ENCODE measurements at regions of chr11 and their contacts with region 1.

Region 1: GRCh38 chr11:65859200-65859811 is 927 bp upstream of the MUS81 start:
- DNase-seq: peak; percentile 90
- ATAC-seq: peak; percentile 64
- H3K4me3 Mint-ChIP-seq: peak overlapping the region; percentile 99
- H3K27ac Mint-ChIP-seq: peak overlapping the region; percentile 98
- H3K4me1 Mint-ChIP-seq: peaks cover 53% of the 10 kb centered on the region
- H3K27me3 Mint-ChIP-seq: no peaks in the 10 kb centered on the region
- CTCF ChIP-seq: no peak

Region 2: DNA sequence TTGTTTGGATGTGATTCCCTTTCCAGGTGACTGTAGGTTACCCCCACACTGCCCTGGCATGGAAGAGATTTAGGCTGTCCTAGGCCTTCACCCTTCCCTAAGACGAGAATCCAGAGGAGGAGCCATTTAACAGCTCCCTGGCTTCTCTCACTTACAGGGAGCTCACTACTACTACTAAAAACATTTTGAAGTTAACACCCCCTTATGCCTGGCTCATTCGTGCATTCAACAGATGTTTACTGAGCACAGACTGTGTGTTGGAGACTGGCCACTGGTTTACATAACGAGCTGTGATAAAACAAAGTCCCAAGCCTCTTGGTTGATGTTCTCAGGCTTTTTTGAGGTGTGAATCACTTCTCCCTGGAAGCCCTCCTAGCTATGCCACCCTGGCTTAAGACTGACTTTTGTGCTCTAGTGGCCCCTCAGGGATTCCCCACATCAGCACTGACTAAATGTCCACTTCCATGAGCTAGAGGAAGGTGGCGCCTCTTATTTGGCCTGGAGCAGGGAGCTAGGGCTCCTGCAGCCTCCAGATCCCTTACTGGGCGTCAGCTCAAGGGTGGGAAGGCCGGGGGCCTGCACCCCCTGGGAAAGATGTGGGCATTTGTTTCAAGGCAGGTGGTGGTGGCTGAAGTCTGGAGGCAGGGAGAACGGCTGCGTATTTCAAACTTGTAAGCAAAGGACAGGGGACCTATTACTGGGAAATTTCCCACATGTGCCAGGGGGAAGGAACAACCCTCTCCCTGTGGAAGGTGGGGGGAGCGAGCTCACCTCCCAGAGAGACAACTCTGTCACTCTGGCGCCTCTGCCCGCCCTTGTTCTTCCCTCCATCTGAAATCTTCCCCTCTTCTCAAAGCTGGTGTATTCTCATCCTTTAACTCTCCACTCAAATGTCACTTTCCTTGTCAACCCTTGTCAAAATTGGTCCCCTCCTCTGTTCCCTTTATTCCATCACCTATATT is 379.8 kb before region 1 on chr11:
- CTCF ChIA-PET with region 1: no interaction called
- POLR2A ChIA-PET with region 1: no interaction called
- intact Hi-C with region 1: no loop called
- DNase-seq: no peak
- ATAC-seq: no peak
- H3K4me3 Mint-ChIP-seq: no peak overlapping the region
- H3K27ac Mint-ChIP-seq: no peak overlapping the region
- H3K4me1 Mint-ChIP-seq: peaks cover 17% of the 10 kb centered on the region
- H3K27me3 Mint-ChIP-seq: no peaks in the 10 kb centered on the region
- CTCF ChIP-seq: no peak

Region 3: DNA sequence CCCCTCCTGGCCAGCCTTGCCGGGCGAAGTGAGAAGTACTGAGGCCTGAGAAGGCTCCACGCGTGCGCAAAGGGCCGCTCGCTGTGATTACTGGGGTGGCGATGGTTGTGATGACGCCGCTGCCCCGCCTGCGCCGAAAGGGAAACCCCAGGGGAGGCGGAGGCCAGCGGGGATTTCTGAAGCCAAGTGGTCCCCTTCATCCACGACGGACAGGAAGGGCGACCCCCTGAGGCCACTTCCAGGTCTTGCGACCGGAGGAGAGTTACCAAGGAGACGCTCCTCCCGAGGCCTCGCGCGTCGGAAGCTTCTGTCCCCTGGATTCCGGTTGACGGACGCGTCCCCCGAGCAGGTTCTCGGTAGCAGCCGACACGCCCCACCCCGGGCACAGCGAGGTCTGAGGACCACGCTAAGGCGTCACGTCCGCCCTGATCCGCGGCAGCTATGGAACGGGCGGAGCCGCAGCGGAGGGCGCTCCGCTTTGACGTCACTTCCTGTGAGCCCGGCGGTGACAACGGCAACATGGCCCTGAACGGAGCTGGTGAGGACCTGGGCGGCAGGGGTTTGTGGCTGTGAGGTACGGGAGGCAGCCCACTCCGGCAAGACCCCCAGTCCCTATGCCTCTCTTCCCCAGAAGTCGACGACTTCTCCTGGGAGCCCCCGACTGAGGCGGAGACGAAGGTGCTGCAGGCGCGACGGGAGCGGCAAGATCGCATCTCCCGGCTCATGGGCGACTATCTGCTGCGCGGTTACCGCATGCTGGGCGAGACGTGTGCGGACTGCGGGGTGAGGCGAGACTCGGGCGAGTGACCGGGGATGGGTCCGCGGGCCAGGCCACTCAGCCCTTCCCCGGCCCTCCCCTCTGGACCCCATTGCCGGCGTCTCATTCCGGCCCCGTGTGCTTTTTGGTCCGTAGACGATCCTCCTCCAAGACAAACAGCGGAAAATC is 289.1 kb before region 1 on chr11 and contains the start of gene ZNRD2:
- CTCF ChIA-PET with region 1: interaction called, 4 read pairs
- POLR2A ChIA-PET with region 1: interaction called, 7 read pairs
- intact Hi-C with region 1: loop called (anchors 5 kb)
- DNase-seq: peak; percentile 93
- ATAC-seq: peak; percentile 68
- H3K4me3 Mint-ChIP-seq: peak within 1 kb of the TSS; percentile 99
- H3K27ac Mint-ChIP-seq: peak within 1 kb of the TSS; percentile 99
- H3K4me1 Mint-ChIP-seq: peaks cover 78% of the 10 kb centered on the region
- H3K27me3 Mint-ChIP-seq: no peaks in the 10 kb centered on the region
- CTCF ChIP-seq: no peak
- total RNA-seq, gene ZNRD2: 40.9 and 41.0 TPM in 2 replicates

Region 4: DNA sequence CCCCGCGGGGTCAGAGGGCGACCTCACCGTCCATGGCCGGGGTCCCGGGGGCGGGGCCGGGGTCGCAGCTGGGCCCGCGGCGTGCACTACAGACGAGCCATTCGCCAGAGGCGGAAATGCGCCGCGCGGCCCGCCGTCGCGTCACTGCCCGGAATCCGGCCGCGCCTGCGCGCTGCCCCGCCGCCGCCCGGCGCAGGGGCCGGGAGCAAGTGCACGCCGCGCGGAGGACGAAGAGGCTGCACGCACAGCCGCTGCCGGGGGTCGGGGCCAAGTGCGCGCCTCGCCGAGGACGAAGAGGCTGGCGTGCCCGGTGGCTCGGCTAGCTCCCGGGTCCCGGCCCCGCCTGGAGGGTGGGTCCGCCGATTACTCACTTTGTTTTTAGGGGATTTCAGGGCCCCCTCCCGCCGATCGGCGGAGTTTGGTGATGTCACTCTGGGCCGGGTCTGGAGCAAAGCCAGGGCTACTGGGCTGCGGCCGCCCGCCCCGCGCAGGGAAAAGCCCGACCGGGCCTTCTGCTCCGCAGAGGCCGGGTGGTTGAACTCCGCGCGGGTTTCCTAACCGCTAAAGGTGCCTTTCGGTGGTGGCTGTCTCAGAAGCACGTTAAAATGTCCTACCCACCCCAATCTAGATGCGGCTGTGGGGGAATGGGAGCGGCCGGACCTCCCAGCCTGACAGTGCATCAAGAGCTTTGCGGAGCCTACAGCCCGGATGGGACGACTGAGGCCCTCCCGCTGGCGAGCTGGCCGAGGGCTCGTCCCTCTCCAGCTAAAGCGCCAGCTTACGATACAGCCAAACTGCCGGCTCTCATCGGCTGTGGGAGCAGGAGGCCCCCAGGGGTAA is 196.3 kb before region 1 on chr11 and contains the start of gene RELA:
- CTCF ChIA-PET with region 1: no interaction called
- POLR2A ChIA-PET with region 1: interaction called, 15 read pairs
- intact Hi-C with region 1: loop called (anchors 2 kb)
- DNase-seq: peak; percentile 91
- ATAC-seq: peak; percentile 87
- H3K4me3 Mint-ChIP-seq: peak within 1 kb of the TSS; percentile 87
- H3K27ac Mint-ChIP-seq: peak within 1 kb of the TSS; percentile 93
- H3K4me1 Mint-ChIP-seq: peaks cover 35% of the 10 kb centered on the region
- H3K27me3 Mint-ChIP-seq: no peaks in the 10 kb centered on the region
- CTCF ChIP-seq: no peak
- total RNA-seq, gene RELA: 110 and 119 TPM in 2 replicates

Region 5: DNA sequence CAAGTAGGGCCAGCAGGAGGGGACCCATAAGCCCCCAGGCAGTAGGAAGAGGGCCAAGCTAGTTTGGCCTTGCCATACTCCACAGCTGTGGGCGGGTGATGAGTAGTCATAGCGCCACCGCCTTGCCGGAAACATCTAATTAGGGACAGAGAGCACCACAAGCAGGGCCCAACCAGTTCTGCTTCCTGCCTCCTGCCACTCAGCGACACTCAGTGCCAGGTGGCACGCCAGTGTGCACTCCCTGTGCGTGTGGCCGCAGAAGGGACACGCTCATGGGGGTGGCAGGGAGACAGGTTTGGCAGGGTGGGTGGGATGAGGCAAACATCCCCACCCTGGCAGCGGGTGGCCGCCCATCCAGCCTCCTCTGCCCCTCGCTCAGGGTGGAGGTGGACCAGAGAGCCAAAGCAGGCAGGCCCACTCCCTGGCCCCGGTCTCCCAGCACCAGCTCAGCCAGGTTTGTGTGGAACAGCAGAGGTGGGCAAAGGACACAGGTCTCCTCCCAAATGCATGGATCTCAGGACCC is 67.6 kb before region 1 on chr11:
- CTCF ChIA-PET with region 1: interaction called, 3 read pairs
- POLR2A ChIA-PET with region 1: interaction called, 15 read pairs
- intact Hi-C with region 1: no loop called
- DNase-seq: peak; percentile 52
- ATAC-seq: peak; percentile 93
- H3K4me3 Mint-ChIP-seq: no peak overlapping the region
- H3K27ac Mint-ChIP-seq: peak overlapping the region; percentile 80
- H3K4me1 Mint-ChIP-seq: peaks cover 40% of the 10 kb centered on the region
- H3K27me3 Mint-ChIP-seq: peaks cover 6% of the 10 kb centered on the region
- CTCF ChIP-seq: no peak

Region 6: DNA sequence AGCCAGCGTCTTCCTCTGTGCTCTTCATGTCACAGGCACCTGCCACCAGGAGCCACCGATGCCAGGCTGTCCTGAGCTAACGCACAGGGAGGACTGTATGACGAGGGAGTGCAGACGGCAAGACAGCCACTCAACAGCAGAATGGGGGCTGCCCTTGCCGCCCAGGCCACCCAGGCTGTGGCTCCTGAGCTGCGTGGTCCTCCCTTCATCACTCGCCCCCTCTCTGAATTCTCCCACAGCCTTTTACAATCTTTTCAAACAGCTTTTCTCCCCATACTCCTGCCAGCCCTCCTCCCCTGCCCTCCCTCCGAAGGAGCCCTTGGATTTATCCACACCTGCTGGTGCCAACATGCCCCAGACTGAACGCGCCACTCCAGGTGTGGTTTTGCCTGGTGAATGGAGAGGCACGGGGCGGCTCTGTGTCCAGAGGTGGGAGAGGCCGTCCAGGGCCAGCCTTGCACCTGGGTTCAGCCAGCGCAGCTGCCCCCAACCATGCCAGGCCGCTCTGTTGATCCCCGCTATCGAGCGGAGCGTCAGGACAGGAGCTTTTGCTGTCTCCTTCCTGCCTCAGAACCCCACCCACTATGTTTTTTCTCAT is 50.5 kb before region 1 on chr11:
- CTCF ChIA-PET with region 1: no interaction called
- POLR2A ChIA-PET with region 1: no interaction called
- intact Hi-C with region 1: no loop called
- DNase-seq: no peak
- ATAC-seq: no peak
- H3K4me3 Mint-ChIP-seq: no peak overlapping the region
- H3K27ac Mint-ChIP-seq: no peak overlapping the region
- H3K4me1 Mint-ChIP-seq: no peaks in the 10 kb centered on the region
- H3K27me3 Mint-ChIP-seq: peaks cover 3% of the 10 kb centered on the region
- CTCF ChIP-seq: no peak

Region 7: GRCh38 chr11:65888163-65888814 is 29.0 kb after region 1 on chr11 and contains the start of gene FIBP:
- CTCF ChIA-PET with region 1: interaction called, 63 read pairs
- POLR2A ChIA-PET with region 1: interaction called, 340 read pairs
- intact Hi-C with region 1: loop called (anchors 1 kb)
- DNase-seq: peak; percentile 91
- ATAC-seq: peak; percentile 63
- H3K4me3 Mint-ChIP-seq: peak within 1 kb of the TSS; percentile 98
- H3K27ac Mint-ChIP-seq: peak within 1 kb of the TSS; percentile 95
- H3K4me1 Mint-ChIP-seq: peaks cover 70% of the 10 kb centered on the region
- H3K27me3 Mint-ChIP-seq: no peaks in the 10 kb centered on the region
- CTCF ChIP-seq: peak; percentile 23
- total RNA-seq, gene FIBP: 74.5 and 76.5 TPM in 2 replicates

Region 8: DNA sequence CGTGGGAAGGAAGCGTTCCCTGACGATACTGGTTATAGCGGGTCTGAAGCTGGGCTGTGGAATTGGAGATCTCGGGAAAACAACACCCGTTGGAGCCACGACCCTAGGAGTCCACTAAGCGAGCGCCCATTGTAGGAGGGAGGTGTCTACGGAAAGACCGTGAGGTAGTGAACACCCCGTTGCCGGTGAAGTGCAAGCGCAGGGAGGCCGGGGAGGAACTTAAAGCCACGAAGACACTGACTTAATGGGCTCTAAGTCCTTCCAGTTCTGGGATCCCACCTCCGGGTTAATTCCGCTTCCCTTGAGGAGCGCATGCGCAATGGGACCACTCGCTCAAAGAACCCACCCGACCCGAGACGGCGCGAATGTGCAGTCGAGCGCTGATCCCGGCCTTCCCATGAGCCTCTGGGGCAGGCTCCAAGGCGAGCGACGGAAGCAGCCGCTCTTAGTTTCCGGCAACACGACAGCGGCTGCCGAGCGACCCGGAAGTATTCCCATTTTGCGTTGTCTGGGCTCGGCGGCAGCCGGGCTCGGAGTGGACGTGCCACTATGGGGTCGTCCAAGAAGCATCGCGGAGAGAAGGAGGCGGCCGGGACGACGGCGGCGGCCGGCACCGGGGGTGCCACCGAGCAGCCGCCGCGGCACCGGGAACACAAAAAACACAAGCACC is 102.1 kb after region 1 on chr11 and contains the start of gene SART1:
- CTCF ChIA-PET with region 1: no interaction called
- POLR2A ChIA-PET with region 1: interaction called, 29 read pairs
- intact Hi-C with region 1: loop called (anchors 1 kb)
- DNase-seq: peak; percentile 85
- ATAC-seq: peak; percentile 89
- H3K4me3 Mint-ChIP-seq: peak within 1 kb of the TSS; percentile 97
- H3K27ac Mint-ChIP-seq: peak within 1 kb of the TSS; percentile 95
- H3K4me1 Mint-ChIP-seq: peaks cover 50% of the 10 kb centered on the region
- H3K27me3 Mint-ChIP-seq: no peaks in the 10 kb centered on the region
- CTCF ChIP-seq: no peak
- total RNA-seq, gene SART1: 86.6 and 92.3 TPM in 2 replicates

Region 9: GRCh38 chr11:66051766-66052663 is 192.7 kb after region 1 on chr11 and contains the start of gene SF3B2:
- CTCF ChIA-PET with region 1: no interaction called
- POLR2A ChIA-PET with region 1: interaction called, 13 read pairs
- intact Hi-C with region 1: loop called (anchors 5 kb)
- DNase-seq: peak; percentile 91
- ATAC-seq: peak; percentile 97
- H3K4me3 Mint-ChIP-seq: peak within 1 kb of the TSS; percentile 99
- H3K27ac Mint-ChIP-seq: peak within 1 kb of the TSS; percentile 96
- H3K4me1 Mint-ChIP-seq: peaks cover 27% of the 10 kb centered on the region
- H3K27me3 Mint-ChIP-seq: peaks cover 8% of the 10 kb centered on the region
- CTCF ChIP-seq: no peak
- total RNA-seq, gene SF3B2: 198 and 219 TPM in 2 replicates

Measured in activated B cell treated with CpG ODN at 0.5 μM for 24 hours (primary cell).